Heart right ventricle (tissue), 16 donors: ENCODE measurements at regions of chr9 and their contacts with region 1.

Region 1: DNA sequence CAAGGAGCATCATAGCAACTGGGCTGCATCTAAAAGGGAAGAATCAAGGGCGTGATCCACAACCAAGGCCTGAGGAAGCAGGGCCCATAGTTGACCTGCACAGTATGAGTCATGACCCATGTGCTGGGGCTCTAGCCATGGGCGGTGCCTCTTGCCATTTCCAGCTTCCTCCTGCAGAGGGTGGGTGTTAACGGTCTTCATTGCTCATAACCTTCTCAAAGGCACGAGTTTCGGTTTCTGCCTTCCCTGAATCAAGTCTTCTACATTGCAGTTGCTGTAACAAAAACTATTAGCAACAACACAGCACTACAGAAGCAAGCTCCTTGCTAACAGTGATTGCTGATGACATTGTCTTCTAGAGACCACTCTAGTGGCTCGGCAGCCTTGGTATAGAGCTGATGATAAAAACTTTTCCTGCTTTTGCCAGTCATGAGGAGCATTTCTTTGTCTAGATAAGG is 66.9 kb downstream of the CTSL start:
- DNase-seq: peak; percentile 49 to 68
- ATAC-seq: peak; percentile 89 to 98 (median 96)
- H3K4me3 ChIP-seq: no peak overlapping the region
- H3K27ac ChIP-seq: peak overlapping the region in 8 of 10 donors; percentile 22 to 90 (median 57)
- H3K4me1 ChIP-seq: peaks cover 0 to 39% (median 0%) of the 10 kb centered on the region in 9 donors
- H3K27me3 ChIP-seq: peaks cover 0 to 7% (median 0%) of the 10 kb centered on the region in 7 donors
- CTCF ChIP-seq: peak in 5 of 9 donors; percentile 10 to 39 (median 24)

Region 2: GRCh38 chr9:86772635-86772993 is 1020.2 kb before region 1 on chr9:
- intact Hi-C with region 1: loop called in 1 of 10 experiments (anchors 10 kb)
- DNase-seq: no peak
- ATAC-seq: peak in 3 of 8 donors; percentile 39 to 55 (median 49)
- H3K4me3 ChIP-seq: no peak overlapping the region
- H3K27ac ChIP-seq: no peak overlapping the region
- H3K4me1 ChIP-seq: no peaks in the 10 kb centered on the region
- H3K27me3 ChIP-seq: peaks cover 0 to 8% (median 0%) of the 10 kb centered on the region in 7 donors
- CTCF ChIP-seq: no peak

Region 3: GRCh38 chr9:87599901-87600610 is 192.8 kb before region 1 on chr9:
- intact Hi-C with region 1: no loop called
- DNase-seq: peak in 1 of 2 donors; percentile 21
- ATAC-seq: peak; percentile 19 to 68 (median 47)
- H3K4me3 ChIP-seq: no peak overlapping the region
- H3K27ac ChIP-seq: peak overlapping the region in 1 of 10 donors; percentile 80
- H3K4me1 ChIP-seq: peaks cover 0 to 56% (median 19%) of the 10 kb centered on the region in 9 donors
- H3K27me3 ChIP-seq: no peaks in the 10 kb centered on the region
- CTCF ChIP-seq: no peak

Region 4: DNA sequence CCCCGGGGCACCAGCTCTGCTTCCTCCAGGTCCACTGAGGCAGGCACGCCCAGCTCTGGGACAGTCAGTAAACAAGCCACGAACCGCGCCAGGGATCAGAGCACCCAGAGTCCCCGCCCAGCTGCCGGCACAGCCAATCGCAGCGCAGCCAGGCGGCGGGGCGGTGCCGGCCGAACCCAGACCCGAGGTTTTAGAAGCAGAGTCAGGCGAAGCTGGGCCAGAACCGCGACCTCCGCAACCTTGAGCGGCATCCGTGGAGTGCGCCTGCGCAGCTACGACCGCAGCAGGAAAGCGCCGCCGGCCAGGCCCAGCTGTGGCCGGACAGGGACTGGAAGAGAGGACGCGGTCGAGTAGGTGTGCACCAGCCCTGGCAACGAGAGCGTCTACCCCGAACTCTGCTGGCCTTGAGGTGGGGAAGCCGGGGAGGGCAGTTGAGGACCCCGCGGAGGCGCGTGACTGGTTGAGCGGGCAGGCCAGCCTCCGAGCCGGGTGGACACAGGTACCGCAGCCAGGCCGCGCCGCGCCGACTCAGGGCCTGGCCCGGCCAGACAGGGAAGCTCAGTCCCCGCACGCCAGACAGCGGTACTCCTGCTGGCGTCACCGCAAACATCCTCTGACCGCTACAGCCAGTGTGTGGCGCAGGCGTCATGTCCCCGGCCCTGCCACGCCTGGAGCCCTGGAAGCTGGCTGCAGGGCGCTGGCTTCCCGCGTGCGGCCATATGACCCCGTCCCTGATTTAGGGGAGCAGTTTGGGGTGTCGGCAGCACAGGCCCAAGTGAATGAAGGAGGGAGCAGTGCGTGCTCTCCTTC is 66.8 kb before region 1 on chr9 and contains the start of gene CTSL:
- intact Hi-C with region 1: loop called in 1 of 10 experiments (anchors 10 kb)
- DNase-seq: peak; percentile 93 to 95
- ATAC-seq: peak; percentile 96 to 98 (median 98)
- H3K4me3 ChIP-seq: peak within 1 kb of the TSS; percentile 45 to 92 (median 76)
- H3K27ac ChIP-seq: peak within 1 kb of the TSS; percentile 84 to 99 (median 96)
- H3K4me1 ChIP-seq: peaks cover 3 to 73% (median 26%) of the 10 kb centered on the region in 9 donors
- H3K27me3 ChIP-seq: peaks cover 0 to 14% (median 0%) of the 10 kb centered on the region in 7 donors
- CTCF ChIP-seq: peak in 5 of 9 donors; percentile 17 to 50 (median 39)
- total RNA-seq, gene CTSL: 109 to 189 (median 134) TPM

Region 5: DNA sequence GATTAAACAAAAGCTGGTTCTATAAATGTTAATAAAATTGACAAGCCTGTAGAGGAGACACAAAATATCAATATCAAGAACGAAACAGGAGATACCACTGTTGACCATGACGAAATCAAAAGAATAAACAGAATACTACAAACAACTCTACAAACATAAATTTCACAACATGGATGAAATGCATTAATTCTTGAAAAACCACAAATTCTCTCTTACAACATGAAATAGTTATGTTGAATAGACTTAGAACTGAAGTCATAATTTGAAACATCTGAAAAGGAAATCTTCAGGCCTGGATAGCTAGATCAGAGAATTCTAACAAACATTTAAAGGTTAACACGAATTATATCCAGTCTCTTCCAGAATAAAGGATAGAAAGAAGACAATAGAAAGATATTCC is 118.0 kb after region 1 on chr9:
- intact Hi-C with region 1: no loop called
- DNase-seq: no peak
- ATAC-seq: no peak
- H3K4me3 ChIP-seq: no peak overlapping the region
- H3K27ac ChIP-seq: no peak overlapping the region
- H3K4me1 ChIP-seq: no peaks in the 10 kb centered on the region
- H3K27me3 ChIP-seq: no peaks in the 10 kb centered on the region
- CTCF ChIP-seq: no peak